Calu3 (cell line): ENCODE measurements at regions of chr19 and their contacts with region 1.

Region 1: GRCh38 chr19:4815426-4816201 is 15.9 kb downstream of the TICAM1 start:
- DNase-seq: peak; percentile 83
- H3K4me3 Mint-ChIP-seq: peak overlapping the region; percentile 63
- H3K27ac Mint-ChIP-seq: peak overlapping the region; percentile 81
- H3K4me1 Mint-ChIP-seq: peaks cover 30% of the 10 kb centered on the region
- H3K27me3 Mint-ChIP-seq: no peaks in the 10 kb centered on the region
- CTCF ChIP-seq: no peak

Region 2: DNA sequence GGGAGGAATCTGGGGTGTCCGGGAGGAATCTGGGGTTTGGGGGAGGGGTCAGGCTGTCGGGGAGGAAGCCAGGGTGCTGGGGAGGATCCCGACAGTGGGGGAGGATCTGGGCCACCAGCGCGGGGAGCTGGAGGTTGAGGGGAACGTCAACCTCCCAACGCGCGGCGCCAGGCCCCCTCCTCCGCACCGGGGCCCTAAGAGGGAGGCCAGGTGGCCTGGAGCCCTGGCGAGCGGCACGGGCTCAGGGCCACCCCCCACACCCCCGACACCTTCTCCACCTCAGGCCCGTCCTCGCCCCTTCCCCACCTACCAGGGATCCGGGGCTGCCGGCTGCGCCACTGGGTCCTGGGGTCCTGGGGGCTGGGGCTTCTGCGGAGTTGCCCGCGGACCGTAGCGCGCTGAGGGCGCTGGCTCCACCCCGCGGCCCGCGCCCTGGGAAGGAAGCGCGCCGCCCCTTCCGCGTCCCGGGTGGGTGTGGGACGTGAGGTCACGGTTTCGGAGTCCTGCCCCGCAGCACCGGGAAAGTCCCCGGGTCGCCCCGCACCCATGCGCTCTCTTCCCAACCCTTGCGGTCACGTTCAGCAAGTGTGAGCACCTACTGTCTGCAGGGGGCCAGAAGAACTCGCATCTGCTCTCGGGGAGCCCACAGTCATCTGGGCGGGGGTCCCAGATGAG is 15.8 kb after region 1 on chr19 and contains the start of gene TICAM1:
- CTCF ChIA-PET with region 1: interaction called, 10 read pairs
- intact Hi-C with region 1: no loop called
- DNase-seq: peak; percentile 60
- H3K4me3 Mint-ChIP-seq: peak within 1 kb of the TSS; percentile 80
- H3K27ac Mint-ChIP-seq: peak within 1 kb of the TSS; percentile 85
- H3K4me1 Mint-ChIP-seq: peaks cover 9% of the 10 kb centered on the region
- H3K27me3 Mint-ChIP-seq: no peaks in the 10 kb centered on the region
- CTCF ChIP-seq: no peak
- total RNA-seq, gene TICAM1: 13.5 and 15.8 TPM in 2 replicates

Region 3: DNA sequence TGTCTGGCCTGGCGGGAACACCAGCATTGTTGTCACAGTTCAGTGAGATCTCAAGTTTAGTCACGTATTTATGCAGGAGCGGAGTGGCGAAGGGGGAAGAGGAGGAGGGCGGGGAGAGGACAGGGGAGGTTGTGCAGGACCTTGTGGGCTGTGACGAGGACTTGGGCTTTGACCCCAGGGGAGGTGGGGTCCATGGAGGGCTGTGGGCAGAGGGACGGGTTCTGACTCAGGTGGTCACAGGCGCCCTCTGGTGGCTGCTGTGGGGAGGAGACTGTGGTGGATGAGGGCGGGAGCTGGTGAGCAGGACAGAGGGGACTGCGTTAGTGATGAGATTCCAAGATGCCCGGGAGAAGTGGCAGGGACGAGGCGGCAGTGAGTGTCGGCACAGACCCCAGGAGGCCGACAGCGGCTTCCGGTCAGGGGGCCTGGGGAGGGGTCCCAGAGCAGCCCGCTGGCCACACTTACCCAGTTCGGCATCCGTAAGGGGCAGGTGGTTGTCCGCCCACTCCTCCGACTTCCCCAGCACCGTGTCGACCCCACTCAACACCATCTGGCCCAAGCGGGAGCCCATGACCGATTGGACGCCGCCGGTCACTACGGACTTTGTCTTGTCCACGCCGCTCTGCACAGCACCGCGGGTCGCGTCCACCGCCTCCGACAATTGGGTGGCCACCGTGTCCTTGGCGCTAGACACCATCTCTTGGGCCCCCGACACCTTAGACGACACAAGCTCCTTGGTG is 36.1 kb after region 1 on chr19:
- CTCF ChIA-PET with region 1: interaction called, 20 read pairs
- intact Hi-C with region 1: no loop called
- DNase-seq: peak; percentile 61
- H3K4me3 Mint-ChIP-seq: no peak overlapping the region
- H3K27ac Mint-ChIP-seq: no peak overlapping the region
- H3K4me1 Mint-ChIP-seq: no peaks in the 10 kb centered on the region
- H3K27me3 Mint-ChIP-seq: no peaks in the 10 kb centered on the region
- CTCF ChIP-seq: peak; percentile 51

Region 4: DNA sequence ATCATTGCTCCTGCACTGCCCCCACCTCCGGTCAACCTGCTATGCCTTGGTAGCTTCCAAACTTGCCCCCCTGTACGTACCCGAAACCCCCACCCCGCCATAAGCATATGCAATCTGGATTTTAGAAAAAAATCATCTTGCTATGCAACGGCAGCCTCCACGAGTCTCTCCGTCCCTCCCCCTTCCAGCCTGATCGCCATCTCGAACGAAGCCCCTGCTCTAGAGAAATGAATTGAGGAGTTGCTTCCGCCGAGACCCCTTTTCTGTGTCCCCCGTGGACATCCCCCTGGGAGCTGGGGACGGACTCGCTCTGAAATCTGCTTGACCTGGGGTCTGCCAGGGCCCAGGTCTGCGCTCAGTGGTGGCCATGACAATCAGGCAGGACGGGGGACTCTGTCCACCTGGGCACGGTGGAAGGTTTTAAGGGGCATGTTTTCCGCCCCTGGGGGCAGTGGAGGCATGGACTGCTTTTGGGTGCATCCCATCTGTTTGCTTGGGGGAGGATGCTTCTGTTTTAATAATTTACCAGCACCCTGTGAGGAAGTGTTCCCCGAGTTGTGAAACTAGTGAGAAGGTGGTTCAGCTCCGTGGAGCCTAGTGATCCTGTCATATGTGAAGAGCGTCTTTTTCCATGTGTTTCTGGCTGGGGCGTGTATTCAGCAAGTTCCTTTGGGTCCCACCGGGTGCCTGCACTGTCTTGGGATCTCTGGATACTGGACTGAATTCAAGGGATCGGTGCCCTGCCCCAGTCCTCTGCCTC is 154.3 kb after region 1 on chr19:
- CTCF ChIA-PET with region 1: interaction called, 7 read pairs
- intact Hi-C with region 1: loop called (anchors 5 kb)
- DNase-seq: no peak
- H3K4me3 Mint-ChIP-seq: peak overlapping the region; percentile 89
- H3K27ac Mint-ChIP-seq: peak overlapping the region; percentile 71
- H3K4me1 Mint-ChIP-seq: peaks cover 28% of the 10 kb centered on the region
- H3K27me3 Mint-ChIP-seq: no peaks in the 10 kb centered on the region
- CTCF ChIP-seq: no peak